ENCODE measurements at regions of chr4 and their contacts with region 1.

Region 1: DNA sequence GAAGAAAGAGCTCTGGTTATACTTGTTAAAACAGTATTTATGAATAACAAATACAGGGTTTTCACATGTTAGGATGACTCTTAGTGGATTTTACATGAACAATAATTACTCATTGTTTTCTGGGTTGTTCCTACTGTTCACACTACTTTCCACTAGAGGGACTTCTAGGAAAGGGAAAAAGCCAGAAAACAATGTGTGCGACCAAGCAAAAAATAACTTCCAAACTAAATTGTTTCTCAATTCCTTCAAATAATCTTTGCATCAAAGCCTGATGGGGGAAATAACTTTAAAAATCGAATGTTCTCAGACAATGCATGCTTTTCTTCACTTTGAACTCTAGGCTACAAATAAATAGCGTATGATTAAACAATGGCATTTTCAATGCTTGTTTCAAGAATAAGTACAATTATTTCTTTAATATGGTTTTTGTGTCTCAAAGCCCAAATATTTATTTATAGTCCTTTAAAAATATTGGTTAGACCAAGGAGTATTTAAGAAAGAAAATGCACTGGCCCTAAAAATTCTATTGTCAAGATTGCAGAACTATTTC is 72.1 kb upstream of the ETNPPL start:
- DNase-seq: no peak
- ATAC-seq: peak; percentile 51
- H3K4me3 Mint-ChIP-seq: no peak overlapping the region
- H3K27ac Mint-ChIP-seq: no peak overlapping the region
- H3K4me1 Mint-ChIP-seq: peaks cover 4% of the 10 kb centered on the region
- H3K27me3 Mint-ChIP-seq: peaks cover 4% of the 10 kb centered on the region

Region 2: DNA sequence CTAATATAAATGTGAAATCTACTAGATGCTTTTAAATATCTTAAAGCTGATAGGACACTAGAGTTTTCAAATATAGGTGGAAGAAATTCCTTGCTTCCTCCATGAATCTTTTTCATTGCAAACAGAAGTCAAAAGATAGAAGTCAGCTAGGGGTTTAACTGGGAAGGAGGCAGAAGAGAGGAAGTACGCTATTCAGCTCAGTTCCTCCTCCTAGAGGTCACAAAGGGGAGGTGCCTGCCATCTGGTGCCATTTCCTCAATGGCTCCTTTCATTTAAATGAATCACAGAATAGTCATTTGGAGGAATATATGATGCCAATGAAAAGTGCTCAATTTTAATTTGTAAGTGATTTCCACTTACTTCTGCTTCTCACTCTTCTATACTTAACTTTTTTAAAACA is 459.1 kb after region 1 on chr4:
- CTCF ChIA-PET with region 1: no interaction called
- POLR2A ChIA-PET with region 1: no interaction called
- intact Hi-C with region 1: loop called (anchors 2 to 10 kb)
- DNase-seq: peak; percentile 58
- ATAC-seq: peak; percentile 88
- H3K4me3 Mint-ChIP-seq: no peak overlapping the region
- H3K27ac Mint-ChIP-seq: no peak overlapping the region
- H3K4me1 Mint-ChIP-seq: no peaks in the 10 kb centered on the region
- H3K27me3 Mint-ChIP-seq: peaks cover 19% of the 10 kb centered on the region

Measured in activated CD4-positive, alpha-beta T cell treated with anti-CD3 and anti-CD28 coated beads for 36 hours (primary cell).